WTC11 (cell line): ENCODE measurements at regions of chr7 and their contacts with region 1.

Region 1: GRCh38 chr7:47991741-47992311 is 12.4 kb upstream of the HUS1 start:
- DNase-seq: peak; percentile 87
- ATAC-seq: peak; percentile 98
- H3K4me3 Mint-ChIP-seq: peak overlapping the region; percentile 75
- H3K27ac Mint-ChIP-seq: peak overlapping the region; percentile 89
- H3K4me1 Mint-ChIP-seq: peaks cover 39% of the 10 kb centered on the region
- H3K27me3 Mint-ChIP-seq: no peaks in the 10 kb centered on the region; the same call in 1 of the 2 replicates
- CTCF ChIP-seq: no peak

Region 2: GRCh38 chr7:48088559-48089045 is 96.8 kb after region 1 on chr7:
- CTCF ChIA-PET with region 1: interaction called, 23 read pairs
- POLR2A ChIA-PET with region 1: interaction called, 17 read pairs
- DNase-seq: peak; percentile 77
- ATAC-seq: peak; percentile 18
- H3K4me3 Mint-ChIP-seq: peak overlapping the region; percentile 81
- H3K27ac Mint-ChIP-seq: peak overlapping the region; percentile 98
- H3K4me1 Mint-ChIP-seq: peaks cover 47% of the 10 kb centered on the region
- H3K27me3 Mint-ChIP-seq: no peaks in the 10 kb centered on the region
- CTCF ChIP-seq: no peak

Region 3: DNA sequence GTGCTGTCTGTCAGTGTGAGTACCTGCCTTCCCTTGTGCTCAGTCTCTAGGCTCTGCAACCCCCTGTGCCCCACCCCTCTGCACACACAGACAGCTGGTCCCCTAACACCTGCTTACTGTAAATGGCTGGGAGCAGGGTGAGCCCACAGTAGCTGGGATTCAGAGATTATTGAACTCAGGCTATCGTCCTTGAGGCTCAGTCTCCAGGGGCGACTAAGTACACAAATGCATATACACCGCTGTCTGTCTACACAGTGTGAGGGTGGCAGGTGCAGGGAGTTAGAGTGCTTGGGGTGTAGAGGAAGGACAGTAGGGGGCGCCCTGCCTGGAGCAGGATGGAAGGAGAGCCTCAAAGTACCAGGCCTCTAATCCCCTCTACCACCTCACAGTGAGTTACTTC is 110.1 kb after region 1 on chr7:
- CTCF ChIA-PET with region 1: interaction called, 11 read pairs
- POLR2A ChIA-PET with region 1: interaction called, 4 read pairs
- DNase-seq: peak; percentile 57
- ATAC-seq: peak; percentile 93
- H3K4me3 Mint-ChIP-seq: no peak overlapping the region
- H3K27ac Mint-ChIP-seq: no peak overlapping the region
- H3K4me1 Mint-ChIP-seq: no peaks in the 10 kb centered on the region
- H3K27me3 Mint-ChIP-seq: no peaks in the 10 kb centered on the region
- CTCF ChIP-seq: peak; percentile 49

Region 4: DNA sequence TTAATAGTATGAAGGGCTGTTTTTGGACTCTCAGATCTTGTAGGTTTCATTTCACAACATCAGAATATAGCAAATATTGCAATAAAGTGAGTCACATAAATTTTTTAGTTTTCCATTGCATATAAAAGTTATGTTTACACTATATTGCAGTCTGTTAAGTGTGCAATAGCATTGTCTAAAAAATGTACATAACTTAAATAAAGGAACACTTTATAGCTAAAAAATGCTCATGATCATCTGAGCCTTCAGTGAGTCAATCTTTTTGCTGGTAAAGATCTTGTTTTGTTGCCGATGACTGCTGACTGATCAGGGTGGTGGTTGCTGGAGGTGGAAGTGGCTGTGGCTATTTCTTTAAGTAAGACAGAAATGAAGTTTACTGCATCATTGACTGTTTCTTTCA is 221.4 kb after region 1 on chr7:
- CTCF ChIA-PET with region 1: no interaction called
- POLR2A ChIA-PET with region 1: no interaction called
- DNase-seq: no peak
- ATAC-seq: no peak
- H3K4me3 Mint-ChIP-seq: no peak overlapping the region
- H3K27ac Mint-ChIP-seq: no peak overlapping the region
- H3K4me1 Mint-ChIP-seq: peaks cover 4% of the 10 kb centered on the region
- H3K27me3 Mint-ChIP-seq: no peaks in the 10 kb centered on the region
- CTCF ChIP-seq: no peak